Adrenal gland (tissue), 19 donors: ENCODE measurements at regions of chr16 and their contacts with region 1.

Region 1: DNA sequence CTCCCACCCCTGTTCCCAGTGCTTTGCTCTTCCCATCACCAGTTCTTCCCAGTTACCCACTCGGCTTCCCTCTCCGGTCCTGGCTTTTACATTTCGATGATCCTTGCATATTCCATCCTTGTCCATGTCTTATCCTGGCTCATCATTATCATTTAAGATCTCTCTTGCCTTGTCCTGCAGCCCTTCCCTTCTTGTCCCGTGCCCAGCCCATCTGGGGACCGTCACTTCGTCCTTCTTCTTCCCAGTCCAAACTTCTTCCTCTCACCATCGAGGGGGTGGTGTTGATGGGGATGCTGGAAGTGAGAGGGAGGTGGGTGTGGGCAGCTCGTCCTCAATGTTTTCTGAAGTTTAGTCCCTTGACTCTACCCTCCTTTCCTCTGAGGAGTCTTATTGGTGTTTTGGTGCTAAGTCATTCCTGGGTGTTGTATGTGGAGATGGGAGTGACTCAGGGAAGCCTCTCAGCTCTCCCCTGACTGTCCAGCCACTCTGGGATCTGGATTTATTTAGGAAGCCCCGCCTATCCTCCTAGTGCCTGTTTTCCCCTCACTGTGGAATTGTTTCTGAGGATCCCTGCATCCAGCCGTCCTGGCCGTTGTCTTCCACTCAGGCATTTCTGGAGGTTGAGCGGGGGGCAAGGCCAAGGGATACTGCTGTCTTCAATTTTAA is 975 bp downstream of the SNX29 start:
- DNase-seq: peak in 5 of 7 donors; percentile 22 to 46 (median 33)
- H3K4me3 ChIP-seq: peak overlapping the region in 3 of 4 donors; percentile 49 to 100 (median 86)
- H3K27ac ChIP-seq: peak overlapping the region in 3 of 5 donors; percentile 13 to 72 (median 67)
- H3K4me1 ChIP-seq: peaks cover 7 to 21% of the 10 kb centered on the region in 2 donors
- H3K27me3 ChIP-seq: no peaks in the 10 kb centered on the region
- CTCF ChIP-seq: no peak
- POLR2A ChIP-seq: peak in 1 of 2 donors; percentile 16

Region 2: GRCh38 chr16:11915644-11916523 is 61.6 kb before region 1 on chr16 and contains the start of gene GSPT1:
- intact Hi-C with region 1: loop called in 1 of 2 experiments (anchors 10 kb)
- DNase-seq: peak; percentile 99
- H3K4me3 ChIP-seq: peak within 1 kb of the TSS; percentile 43 to 98 (median 74)
- H3K27ac ChIP-seq: peak within 1 kb of the TSS; percentile 79 to 98 (median 95)
- H3K4me1 ChIP-seq: peaks cover 24 to 39% of the 10 kb centered on the region in 2 donors
- H3K27me3 ChIP-seq: no peaks in the 10 kb centered on the region
- CTCF ChIP-seq: peak in 4 of 6 experiments; percentile 14 to 62 (median 23)
- POLR2A ChIP-seq: peak; percentile 59 to 92
- total RNA-seq, gene GSPT1: 55.2 to 188 (median 113) TPM

Region 3: GRCh38 chr16:12095275-12096156 is 118.0 kb after region 1 on chr16:
- intact Hi-C with region 1: no loop called
- DNase-seq: peak; percentile 39 to 81 (median 71)
- H3K4me3 ChIP-seq: no peak overlapping the region
- H3K27ac ChIP-seq: no peak overlapping the region
- H3K4me1 ChIP-seq: peaks cover 0 to 32% of the 10 kb centered on the region in 2 donors
- H3K27me3 ChIP-seq: no peaks in the 10 kb centered on the region
- CTCF ChIP-seq: peak; percentile 71 to 96 (median 80)
- POLR2A ChIP-seq: no peak